ENCODE measurements at regions of chr10 and their contacts with region 1.

Region 1: GRCh38 chr10:69914398-69915214 is 112.9 kb downstream of the COL13A1 start:
- DNase-seq: peak in 1 of 2 donors; percentile 88
- H3K4me3 ChIP-seq: no peak overlapping the region
- H3K27ac ChIP-seq: peak overlapping the region in 1 of 2 donors; percentile 7
- H3K4me1 ChIP-seq: peaks cover 22 to 27% of the 10 kb centered on the region in 2 donors
- H3K27me3 ChIP-seq: no peaks in the 10 kb centered on the region
- CTCF ChIP-seq: peak; percentile 90 to 98 (median 92)

Region 2: DNA sequence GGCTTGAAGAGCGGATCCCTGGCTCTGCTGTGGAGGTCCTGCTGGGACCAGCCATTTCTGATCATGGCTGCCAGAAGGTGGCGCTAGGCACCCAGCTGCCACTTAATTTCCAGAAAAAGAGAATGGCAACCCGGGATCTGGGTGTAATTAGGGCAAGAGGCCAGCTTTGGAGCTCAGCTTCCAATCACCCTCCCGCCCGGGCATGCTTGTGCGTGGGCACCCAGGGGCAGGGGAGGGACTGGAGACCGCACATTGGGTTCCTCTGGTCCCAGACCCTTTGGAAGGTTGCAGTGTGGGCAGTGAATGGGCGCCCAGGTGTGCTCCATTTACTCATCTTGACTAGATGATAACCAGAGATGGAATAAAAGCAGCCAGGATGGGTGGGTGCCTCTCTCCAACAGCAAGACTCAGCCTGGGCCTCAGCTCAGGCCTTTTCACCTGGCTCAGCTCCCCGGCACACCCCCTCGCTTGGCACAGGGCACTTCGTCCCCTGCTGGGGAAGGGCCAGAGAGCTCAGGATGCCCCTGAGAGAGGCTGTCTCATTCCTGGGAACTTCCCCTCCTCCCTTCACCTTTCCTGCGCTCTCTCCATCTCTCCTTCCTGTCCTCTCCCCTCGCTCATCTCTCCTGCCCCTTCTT is 269.8 kb before region 1 on chr10:
- intact Hi-C with region 1: loop called (anchors 1 kb)
- DNase-seq: peak in 1 of 2 donors; percentile 75
- H3K4me3 ChIP-seq: no peak overlapping the region
- H3K27ac ChIP-seq: no peak overlapping the region
- H3K4me1 ChIP-seq: peaks cover 0 to 5% of the 10 kb centered on the region in 2 donors
- H3K27me3 ChIP-seq: no peaks in the 10 kb centered on the region
- CTCF ChIP-seq: peak; percentile 76 to 90 (median 82)

Region 3: GRCh38 chr10:69685802-69686585 is 228.6 kb before region 1 on chr10:
- intact Hi-C with region 1: loop called (anchors 5 kb)
- DNase-seq: peak in 1 of 2 donors; percentile 79
- H3K4me3 ChIP-seq: no peak overlapping the region
- H3K27ac ChIP-seq: peak overlapping the region; percentile 10 to 71
- H3K4me1 ChIP-seq: peaks cover 5 to 21% of the 10 kb centered on the region in 2 donors
- H3K27me3 ChIP-seq: no peaks in the 10 kb centered on the region
- CTCF ChIP-seq: no peak

Region 4: GRCh38 chr10:69731184-69731583 is 183.4 kb before region 1 on chr10:
- intact Hi-C with region 1: loop called (anchors 5 kb)
- DNase-seq: peak in 1 of 2 donors; percentile 84
- H3K4me3 ChIP-seq: no peak overlapping the region
- H3K27ac ChIP-seq: peak overlapping the region; percentile 92 to 93
- H3K4me1 ChIP-seq: peaks cover 45 to 62% of the 10 kb centered on the region in 2 donors
- H3K27me3 ChIP-seq: no peaks in the 10 kb centered on the region
- CTCF ChIP-seq: peak; percentile 15 to 22 (median 18)

Region 5: GRCh38 chr10:69786791-69787190 is 127.8 kb before region 1 on chr10:
- intact Hi-C with region 1: loop called (anchors 2 kb)
- DNase-seq: peak in 1 of 2 donors; percentile 65
- H3K4me3 ChIP-seq: no peak overlapping the region
- H3K27ac ChIP-seq: peak overlapping the region; percentile 11 to 42
- H3K4me1 ChIP-seq: peaks cover 5 to 20% of the 10 kb centered on the region in 2 donors
- H3K27me3 ChIP-seq: no peaks in the 10 kb centered on the region
- CTCF ChIP-seq: peak in 2 of 3 experiments; percentile 14 to 43

Region 6: GRCh38 chr10:69866688-69867461 is 47.7 kb before region 1 on chr10:
- intact Hi-C with region 1: loop called (anchors 5 kb)
- DNase-seq: no peak
- H3K4me3 ChIP-seq: peak overlapping the region; percentile 18 to 48
- H3K27ac ChIP-seq: peak overlapping the region in 1 of 2 donors; percentile 2
- H3K4me1 ChIP-seq: peaks cover 0 to 4% of the 10 kb centered on the region in 2 donors
- H3K27me3 ChIP-seq: no peaks in the 10 kb centered on the region
- CTCF ChIP-seq: peak in 1 of 3 experiments; percentile 16

Region 7: DNA sequence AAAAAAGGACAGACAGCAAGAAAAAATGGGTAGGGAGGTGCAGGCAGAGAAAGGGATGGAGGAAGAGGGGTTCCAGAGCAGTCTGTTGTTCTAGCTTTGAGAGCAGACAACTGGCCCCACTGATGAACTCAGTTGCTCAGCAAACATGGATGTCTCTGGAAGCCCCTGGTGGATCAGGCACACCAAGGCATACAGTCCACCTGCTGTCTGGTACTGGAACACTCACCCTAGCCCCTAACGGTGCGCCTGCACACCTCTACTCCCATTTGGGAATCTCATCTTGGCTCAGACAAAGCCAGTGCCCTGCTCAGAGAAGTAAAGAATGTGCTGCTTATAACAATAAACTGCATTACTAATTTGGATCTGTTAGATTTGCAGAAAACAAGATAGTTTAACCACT is 145.8 kb after region 1 on chr10:
- intact Hi-C with region 1: no loop called
- DNase-seq: no peak
- H3K4me3 ChIP-seq: no peak overlapping the region
- H3K27ac ChIP-seq: no peak overlapping the region
- H3K4me1 ChIP-seq: no peaks in the 10 kb centered on the region
- H3K27me3 ChIP-seq: no peaks in the 10 kb centered on the region
- CTCF ChIP-seq: no peak

Measured in ascending aorta (tissue), 2 donors.